HEK293 (cell line): ENCODE measurements at regions of chr17 and their contacts with region 1.

Region 1: GRCh38 chr17:75927286-75927922 is 13.4 kb downstream of the FBF1 start:
- H3K4me3 ChIP-seq: no peak overlapping the region
- H3K27ac ChIP-seq: no peak overlapping the region
- H3K4me1 ChIP-seq: no peaks in the 10 kb centered on the region
- CTCF ChIP-seq: peak; percentile 15; the same call in 1 of the 2 replicates

Region 2: GRCh38 chr17:75904749-75905521 is 22.5 kb before region 1 on chr17 and contains the start of gene MRPL38:
- CTCF ChIA-PET with region 1: interaction called, 47 read pairs
- POLR2A ChIA-PET with region 1: no interaction called
- H3K4me3 ChIP-seq: peak within 1 kb of the TSS; percentile 92
- H3K27ac ChIP-seq: peak within 1 kb of the TSS; percentile 87
- H3K4me1 ChIP-seq: peaks cover 8% of the 10 kb centered on the region
- CTCF ChIP-seq: peak; percentile 99

Region 3: GRCh38 chr17:75914643-75915267 is 12.6 kb before region 1 on chr17:
- CTCF ChIA-PET with region 1: interaction called, 16 read pairs
- POLR2A ChIA-PET with region 1: no interaction called
- H3K4me3 ChIP-seq: no peak overlapping the region
- H3K27ac ChIP-seq: no peak overlapping the region
- H3K4me1 ChIP-seq: no peaks in the 10 kb centered on the region
- CTCF ChIP-seq: no peak

Region 4: GRCh38 chr17:76088036-76088867 is 160.8 kb after region 1 on chr17:
- CTCF ChIA-PET with region 1: no interaction called
- POLR2A ChIA-PET with region 1: no interaction called
- H3K4me3 ChIP-seq: no peak overlapping the region
- H3K27ac ChIP-seq: no peak overlapping the region
- H3K4me1 ChIP-seq: peaks cover 4% of the 10 kb centered on the region
- CTCF ChIP-seq: 0 out of 2 replicates have a peak, but pooled peaks have one; percentile 14